Activated T-helper 2 cell treated with anti-CD3 and anti-CD28 coated beads, Interferon-gamma antibody, Interleukin-2, Interleukin-4, amounts not matched to agents 10 μg/mL and 5 μg/mL and 100 μg/mL, durations not matched to agents 14 hours and 24 hours and 36 hours (primary cell): ENCODE measurements at regions of chr11 and their contacts with region 1.

Region 1: GRCh38 chr11:65569973-65570918 is at the start of gene ZNRD2:
- DNase-seq: peak; percentile 99
- H3K4me3 Mint-ChIP-seq: peak within 1 kb of the TSS; percentile 97
- H3K27ac Mint-ChIP-seq: peak within 1 kb of the TSS; percentile 98
- H3K4me1 Mint-ChIP-seq: peaks cover 57% of the 10 kb centered on the region
- H3K27me3 Mint-ChIP-seq: no peaks in the 10 kb centered on the region
- total RNA-seq, gene ZNRD2: 63.6 and 63.8 TPM in 2 replicates

Region 2: GRCh38 chr11:65117216-65118096 is 452.8 kb before region 1 on chr11 and contains the start of gene ZNHIT2:
- intact Hi-C with region 1: loop called (anchors 10 kb)
- DNase-seq: peak; percentile 100
- H3K4me3 Mint-ChIP-seq: peak within 1 kb of the TSS; percentile 84
- H3K27ac Mint-ChIP-seq: peak within 1 kb of the TSS; percentile 88
- H3K4me1 Mint-ChIP-seq: peaks cover 28% of the 10 kb centered on the region
- H3K27me3 Mint-ChIP-seq: no peaks in the 10 kb centered on the region
- total RNA-seq, gene ZNHIT2: 11.3 and 12.8 TPM in 2 replicates

Region 3: DNA sequence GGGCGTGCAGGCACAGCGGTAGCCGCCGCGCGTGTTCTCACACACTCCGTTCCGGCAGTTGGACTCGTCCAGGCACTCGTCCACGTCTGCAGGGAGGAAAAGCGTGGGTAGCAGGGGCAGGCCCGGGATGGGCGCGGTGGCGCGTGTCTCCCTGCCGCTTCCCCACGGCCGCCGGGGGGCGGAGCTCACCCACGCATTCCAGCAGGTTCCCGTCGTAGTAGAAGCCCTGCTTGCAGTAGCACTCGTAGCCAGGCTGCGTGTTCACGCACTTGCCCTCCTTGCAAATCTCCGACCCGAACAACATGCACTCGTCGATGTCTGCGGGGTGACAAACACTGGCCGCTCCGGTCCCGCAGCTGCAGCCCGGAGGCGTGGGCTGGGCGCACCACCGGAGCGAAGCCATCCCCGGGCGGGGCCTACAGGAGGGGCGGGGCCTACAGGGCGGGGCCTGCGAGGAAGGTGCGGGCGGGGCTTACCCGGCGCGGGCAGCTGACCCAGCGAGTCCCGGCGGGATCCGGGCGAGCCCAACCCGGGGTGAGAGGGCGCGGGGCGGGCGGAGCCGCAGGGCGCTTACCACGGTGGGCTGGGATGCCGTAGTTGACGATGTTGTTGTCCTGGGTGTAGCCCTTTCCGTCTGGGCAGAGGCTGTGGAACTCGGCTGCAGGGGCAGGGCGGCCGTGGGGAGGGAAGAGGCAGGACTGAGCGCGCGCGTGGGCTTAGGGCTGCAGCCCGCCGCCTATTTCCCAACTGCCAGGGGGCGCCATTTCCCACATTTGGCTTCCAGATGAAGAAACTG is 29.8 kb before region 1 on chr11:
- intact Hi-C with region 1: loop called (anchors 1 kb)
- DNase-seq: peak; percentile 86
- H3K4me3 Mint-ChIP-seq: peak overlapping the region; percentile 81
- H3K27ac Mint-ChIP-seq: peak overlapping the region; percentile 70
- H3K4me1 Mint-ChIP-seq: peaks cover 18% of the 10 kb centered on the region
- H3K27me3 Mint-ChIP-seq: no peaks in the 10 kb centered on the region

Region 4: GRCh38 chr11:65588199-65589054 is 18.2 kb after region 1 on chr11:
- intact Hi-C with region 1: loop called (anchors 1 kb)
- DNase-seq: peak; percentile 70
- H3K4me3 Mint-ChIP-seq: peak overlapping the region; percentile 69
- H3K27ac Mint-ChIP-seq: peak overlapping the region; percentile 93
- H3K4me1 Mint-ChIP-seq: peaks cover 37% of the 10 kb centered on the region
- H3K27me3 Mint-ChIP-seq: no peaks in the 10 kb centered on the region

Region 5: DNA sequence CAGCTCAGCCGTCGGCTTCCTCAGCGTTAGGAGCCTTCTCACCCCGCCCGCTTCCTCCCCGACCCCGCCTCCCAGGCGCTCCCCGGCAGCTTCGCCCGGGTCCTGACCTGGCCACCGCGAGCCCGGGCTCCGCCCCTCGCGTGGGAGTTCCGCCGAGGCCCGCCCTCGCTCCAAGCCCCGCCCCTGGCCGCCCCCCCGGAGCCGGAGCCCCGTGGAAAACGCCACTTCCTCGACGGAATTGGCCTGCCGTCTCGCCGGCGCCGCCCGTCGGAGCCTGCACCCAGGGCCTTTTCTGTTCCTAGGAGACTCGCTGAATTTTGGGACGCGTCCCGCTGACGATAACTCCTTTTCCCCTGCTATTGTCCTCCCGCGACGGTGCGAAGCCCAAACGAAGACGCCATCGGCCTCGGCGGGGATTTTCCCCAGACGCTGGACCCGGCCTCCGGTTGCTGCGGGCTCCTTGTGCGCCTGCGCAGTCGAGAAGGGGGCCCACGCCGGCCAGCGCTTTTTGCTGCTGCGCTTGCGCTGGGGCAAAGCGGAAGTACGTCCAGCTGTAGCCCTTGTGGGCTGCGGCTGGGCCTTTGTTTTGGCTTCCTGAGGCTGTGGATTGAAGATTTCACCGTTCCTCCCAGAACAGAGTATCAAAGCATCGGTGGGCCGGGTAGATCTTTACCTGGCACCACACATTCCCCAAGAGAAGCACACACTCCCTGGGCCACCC is 82.4 kb after region 1 on chr11:
- intact Hi-C with region 1: loop called (anchors 5 kb)
- DNase-seq: peak; percentile 96
- H3K4me3 Mint-ChIP-seq: peak overlapping the region; percentile 79
- H3K27ac Mint-ChIP-seq: peak overlapping the region; percentile 88
- H3K4me1 Mint-ChIP-seq: peaks cover 30% of the 10 kb centered on the region
- H3K27me3 Mint-ChIP-seq: no peaks in the 10 kb centered on the region